ENCODE measurements at regions of chr6 and their contacts with region 1.

Region 1: GRCh38 chr6:11496152-11497060 is 41.1 kb upstream of the TMEM170B start:
- DNase-seq: peak; percentile 87
- ATAC-seq: peak; percentile 74
- H3K4me3 ChIP-seq: no peak overlapping the region
- H3K27ac ChIP-seq: peak overlapping the region; percentile 22; the same call in 1 of the 2 replicates
- H3K4me1 ChIP-seq: peaks cover 26% of the 10 kb centered on the region
- H3K27me3 ChIP-seq: no peaks in the 10 kb centered on the region
- CTCF ChIP-seq: peak; percentile 97

Region 2: GRCh38 chr6:11093589-11094410 is 402.6 kb before region 1 on chr6 and contains the start of gene SMIM13:
- CTCF ChIA-PET with region 1: no interaction called
- POLR2A ChIA-PET with region 1: interaction called, 3 read pairs
- intact Hi-C with region 1: loop called (anchors 1 kb)
- DNase-seq: peak; percentile 98
- ATAC-seq: peak; percentile 95
- H3K4me3 ChIP-seq: peak within 1 kb of the TSS; percentile 96
- H3K27ac ChIP-seq: peak within 1 kb of the TSS; percentile 69
- H3K4me1 ChIP-seq: peaks cover 18% of the 10 kb centered on the region
- H3K27me3 ChIP-seq: no peaks in the 10 kb centered on the region
- CTCF ChIP-seq: peak; percentile 45
- total RNA-seq, gene SMIM13: 7.1 and 9.0 TPM in 2 replicates

Region 3: GRCh38 chr6:11161031-11161966 is 335.1 kb before region 1 on chr6:
- CTCF ChIA-PET with region 1: no interaction called
- POLR2A ChIA-PET with region 1: no interaction called
- intact Hi-C with region 1: loop called (anchors 5 kb)
- DNase-seq: peak; percentile 75
- ATAC-seq: peak; percentile 86
- H3K4me3 ChIP-seq: no peak overlapping the region
- H3K27ac ChIP-seq: peak overlapping the region; percentile 79
- H3K4me1 ChIP-seq: peaks cover 28% of the 10 kb centered on the region
- H3K27me3 ChIP-seq: no peaks in the 10 kb centered on the region
- CTCF ChIP-seq: no peak

Region 4: DNA sequence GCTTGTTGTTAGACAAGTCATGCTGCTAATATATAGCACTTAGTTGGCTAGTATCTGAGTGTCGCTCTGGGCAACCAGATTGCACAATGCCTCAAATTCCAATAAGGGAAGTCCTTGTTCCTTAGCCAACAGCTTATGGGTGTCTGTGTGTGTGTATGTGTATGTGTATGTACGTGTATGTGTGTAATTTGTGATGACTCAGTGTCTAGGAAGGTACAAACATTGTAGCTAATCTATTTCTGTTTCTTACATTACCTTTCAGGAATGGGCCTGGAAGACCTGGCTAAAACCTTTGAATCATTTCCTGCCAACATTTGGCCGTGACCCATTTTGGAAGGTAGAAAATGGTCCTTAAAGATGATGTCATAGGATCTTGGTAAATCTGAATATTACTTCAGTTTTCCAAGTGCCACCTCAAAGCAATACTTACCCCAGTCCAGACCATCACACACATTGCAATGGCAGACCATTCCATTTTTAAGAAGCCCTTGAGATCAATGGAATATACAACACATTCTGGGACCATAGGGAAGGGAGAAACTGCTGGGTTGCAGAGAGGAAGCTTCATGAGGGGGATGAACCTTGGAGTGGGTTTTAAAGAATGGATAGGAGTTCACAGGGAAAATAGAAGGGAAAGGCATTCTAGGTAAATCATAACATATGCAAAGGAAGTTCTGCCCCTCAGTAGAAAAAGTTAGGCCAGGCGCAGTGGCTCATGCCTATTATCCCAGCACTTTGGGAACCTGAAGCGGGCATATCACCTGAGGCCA is 289.0 kb before region 1 on chr6:
- CTCF ChIA-PET with region 1: interaction called, 8 read pairs
- POLR2A ChIA-PET with region 1: interaction called, 3 read pairs
- intact Hi-C with region 1: loop called (anchors 2 kb)
- DNase-seq: peak; percentile 98
- ATAC-seq: peak; percentile 85
- H3K4me3 ChIP-seq: peak overlapping the region; percentile 56; the same call in 1 of the 2 replicates
- H3K27ac ChIP-seq: peak overlapping the region; percentile 97
- H3K4me1 ChIP-seq: peaks cover 46% of the 10 kb centered on the region
- H3K27me3 ChIP-seq: no peaks in the 10 kb centered on the region
- CTCF ChIP-seq: no peak

Region 5: DNA sequence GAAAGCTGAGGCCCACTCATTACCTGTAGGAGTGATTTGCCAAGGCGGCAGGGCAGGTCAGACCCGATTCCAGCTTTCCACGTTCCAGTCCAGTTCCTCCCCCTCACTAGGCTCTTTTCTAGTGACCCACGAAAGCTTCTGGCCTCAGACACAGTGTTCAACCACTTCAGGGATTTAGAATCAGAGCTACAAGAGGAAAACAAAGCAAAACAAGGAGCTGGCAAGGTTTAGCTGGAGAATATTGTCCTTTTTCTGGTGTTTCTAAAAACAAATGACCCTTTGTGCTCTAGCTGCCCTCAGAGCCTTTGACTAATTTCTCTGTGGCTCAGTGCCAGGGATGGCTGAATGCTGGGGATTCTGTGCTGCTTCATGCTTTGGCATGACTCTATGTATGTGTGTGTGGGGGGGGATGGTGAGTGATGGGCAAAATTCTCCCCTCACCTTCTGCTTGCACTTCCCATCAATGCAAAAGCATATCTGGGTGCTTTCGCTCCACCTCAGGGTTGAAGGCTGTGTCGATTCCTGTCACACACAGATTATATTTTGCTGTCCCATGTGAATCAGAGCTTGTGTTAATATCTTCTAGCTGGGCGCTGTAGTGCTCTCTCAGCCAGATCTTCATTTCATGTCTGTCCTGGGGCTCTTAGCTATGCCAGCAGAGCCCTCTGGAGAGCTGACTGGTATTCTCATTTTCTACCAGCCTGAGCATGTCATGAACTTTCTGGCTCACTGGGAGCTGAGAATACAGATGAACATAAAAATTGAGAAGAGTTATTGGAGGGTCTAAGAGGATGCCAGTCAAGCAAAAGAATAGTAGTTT is 244.7 kb before region 1 on chr6:
- CTCF ChIA-PET with region 1: no interaction called
- POLR2A ChIA-PET with region 1: no interaction called
- intact Hi-C with region 1: loop called (anchors 1 kb)
- DNase-seq: peak; percentile 86
- ATAC-seq: peak; percentile 63
- H3K4me3 ChIP-seq: no peak overlapping the region
- H3K27ac ChIP-seq: peak overlapping the region; percentile 74
- H3K4me1 ChIP-seq: peaks cover 39% of the 10 kb centered on the region
- H3K27me3 ChIP-seq: no peaks in the 10 kb centered on the region
- CTCF ChIP-seq: no peak

Region 6: GRCh38 chr6:11434565-11435326 is 61.7 kb before region 1 on chr6:
- CTCF ChIA-PET with region 1: interaction called, 4 read pairs
- POLR2A ChIA-PET with region 1: no interaction called
- intact Hi-C with region 1: loop called (anchors 2 kb)
- DNase-seq: peak; percentile 97
- ATAC-seq: peak; percentile 85
- H3K4me3 ChIP-seq: no peak overlapping the region
- H3K27ac ChIP-seq: peak overlapping the region; percentile 98
- H3K4me1 ChIP-seq: peaks cover 53% of the 10 kb centered on the region
- H3K27me3 ChIP-seq: no peaks in the 10 kb centered on the region
- CTCF ChIP-seq: no peak

Region 7: DNA sequence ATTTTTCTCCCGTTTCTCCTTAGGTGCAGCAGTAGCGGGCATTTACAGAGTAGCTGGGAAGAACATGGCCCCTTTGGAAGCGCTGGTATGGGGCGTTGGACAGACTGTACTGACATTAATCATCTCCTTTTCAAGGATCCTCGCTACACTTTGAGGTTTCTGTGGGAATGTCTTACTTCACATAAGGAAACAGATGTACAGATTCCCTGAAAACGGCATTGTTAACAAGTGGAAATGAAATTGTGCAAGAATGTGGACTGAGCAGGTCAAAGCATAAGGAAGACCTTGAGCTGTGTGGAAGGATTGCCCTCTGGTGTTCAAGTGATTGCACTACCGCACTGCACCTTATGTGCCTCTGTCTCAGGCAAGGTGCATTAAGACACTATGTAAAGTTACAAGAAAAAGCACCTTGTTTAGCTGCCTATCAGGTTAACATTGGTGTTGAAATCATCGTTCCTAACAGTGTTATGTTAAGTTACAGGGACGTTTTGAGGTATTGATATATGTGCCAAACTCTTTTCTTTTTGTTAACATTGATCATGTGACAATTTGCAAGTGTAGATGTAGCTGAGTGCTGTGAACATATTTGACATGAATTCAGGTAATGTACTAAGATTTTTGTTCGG is 79.1 kb after region 1 on chr6:
- CTCF ChIA-PET with region 1: interaction called, 5 read pairs
- POLR2A ChIA-PET with region 1: no interaction called
- intact Hi-C with region 1: loop called (anchors 1 kb)
- DNase-seq: peak; percentile 85
- ATAC-seq: peak; percentile 100
- H3K4me3 ChIP-seq: peak overlapping the region; percentile 21
- H3K27ac ChIP-seq: no peak overlapping the region
- H3K4me1 ChIP-seq: 0 out of 2 replicates have a peak, but pooled peaks cover 3% of the 10 kb centered on the region
- H3K27me3 ChIP-seq: no peaks in the 10 kb centered on the region
- CTCF ChIP-seq: peak; percentile 95

Measured in PC-3 (cell line).